KBM-7 (cell line): ENCODE measurements at regions of chr11 and their contacts with region 1.

Region 1: GRCh38 chr11:60345489-60345888 is 18.4 kb downstream of the MS4A6E start:
- DNase-seq: peak; percentile 50

Region 2: GRCh38 chr11:60447846-60448245 is 102.4 kb after region 1 on chr11:
- in situ Hi-C with region 1: no loop called
- DNase-seq: no peak

Region 3: DNA sequence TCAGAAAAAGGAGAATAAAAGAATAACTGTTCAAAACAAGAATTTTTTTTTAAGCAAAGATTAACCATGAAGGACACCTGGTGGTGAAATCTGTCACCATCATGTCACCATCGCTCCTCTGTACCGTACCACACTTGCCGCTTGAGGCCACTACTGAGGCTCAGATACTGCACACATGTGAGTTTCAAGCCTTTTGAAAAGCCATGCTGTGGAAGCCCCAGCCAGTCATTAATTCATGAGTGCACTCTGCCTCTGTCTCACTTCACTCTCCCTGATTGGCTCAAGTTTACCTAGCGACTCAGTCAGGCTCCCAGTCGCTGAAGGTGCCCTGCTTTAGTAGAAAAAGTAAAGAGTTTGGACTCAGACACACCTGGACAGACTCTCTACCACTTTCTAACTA is 140.5 kb after region 1 on chr11:
- in situ Hi-C with region 1: loop called (anchors 10 kb)
- DNase-seq: peak; percentile 95